Heart left ventricle (tissue), 16 donors: ENCODE measurements at regions of chr10 and their contacts with region 1.

Region 1: GRCh38 chr10:79112881-79113431 is 44.2 kb downstream of the ZMIZ1 start:
- DNase-seq: peak in 3 of 5 donors; percentile 56 to 89 (median 71)
- ATAC-seq: peak; percentile 39 to 81 (median 68)
- H3K4me3 ChIP-seq: no peak overlapping the region
- H3K27ac ChIP-seq: peak overlapping the region; percentile 22 to 96 (median 86)
- H3K4me1 ChIP-seq: peaks cover 22 to 99% (median 86%) of the 10 kb centered on the region in 12 donors
- H3K27me3 ChIP-seq: no peaks in the 10 kb centered on the region
- CTCF ChIP-seq: no peak
- POLR2A ChIP-seq: no peak

Region 2: GRCh38 chr10:79059859-79060379 is 53.0 kb before region 1 on chr10:
- intact Hi-C with region 1: no loop called
- DNase-seq: peak in 2 of 5 donors; percentile 17 to 24
- ATAC-seq: no peak
- H3K4me3 ChIP-seq: no peak overlapping the region
- H3K27ac ChIP-seq: no peak overlapping the region
- H3K4me1 ChIP-seq: peaks cover 0 to 10% (median 4%) of the 10 kb centered on the region in 12 donors
- H3K27me3 ChIP-seq: no peaks in the 10 kb centered on the region
- CTCF ChIP-seq: no peak
- POLR2A ChIP-seq: no peak

Region 3: DNA sequence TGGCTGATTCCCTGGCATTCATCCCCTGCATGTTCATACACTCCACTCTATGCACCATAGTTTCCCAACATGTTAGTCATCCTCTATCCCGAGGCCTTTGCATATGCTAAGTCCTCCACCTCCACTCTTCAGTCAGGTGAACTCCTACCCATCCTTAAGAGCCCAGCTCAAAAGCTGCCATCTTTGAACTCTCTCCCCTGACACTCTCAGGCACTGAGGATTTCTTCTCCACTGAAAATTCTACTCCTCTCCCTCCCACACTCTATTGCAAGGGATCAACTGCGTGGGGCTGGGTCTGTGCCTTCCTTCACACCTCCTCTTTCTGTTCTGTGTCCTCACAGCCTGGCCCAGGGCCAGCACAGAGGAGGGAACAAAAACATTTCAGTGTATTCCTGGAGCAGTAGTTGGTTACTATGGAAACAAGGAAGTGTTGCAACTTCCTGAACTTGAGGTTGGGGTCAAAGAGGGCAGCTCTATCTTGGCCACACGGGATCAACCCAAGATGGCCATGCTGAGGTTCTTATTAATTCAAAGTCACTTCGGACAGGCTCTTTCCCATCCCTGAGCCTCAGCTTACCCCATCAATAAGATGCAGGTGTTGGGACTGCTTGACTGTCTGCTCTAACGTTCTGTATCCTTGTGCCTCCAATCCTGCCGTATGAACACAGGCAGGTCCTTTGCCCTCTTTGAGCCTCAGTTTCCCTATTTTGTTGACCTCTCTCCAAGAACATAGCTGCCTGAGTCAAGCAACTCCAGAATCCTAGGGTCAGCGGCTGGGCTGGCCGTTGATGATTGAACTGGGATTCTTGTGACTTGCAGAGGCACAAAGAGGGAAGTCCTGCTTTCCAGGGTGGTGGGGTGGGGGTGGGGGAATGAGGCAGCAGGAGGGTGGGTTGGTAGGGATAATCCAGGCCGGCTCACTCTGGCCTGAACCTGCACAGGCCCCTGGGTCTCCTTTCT is 28.7 kb before region 1 on chr10:
- intact Hi-C with region 1: loop called in 1 of 10 experiments (anchors 2 kb)
- DNase-seq: peak; percentile 88 to 96 (median 95)
- ATAC-seq: peak; percentile 54 to 74 (median 62)
- H3K4me3 ChIP-seq: peak overlapping the region in 1 of 12 donors; percentile 29
- H3K27ac ChIP-seq: peak overlapping the region; percentile 53 to 99 (median 77)
- H3K4me1 ChIP-seq: peaks cover 28 to 100% (median 97%) of the 10 kb centered on the region in 12 donors
- H3K27me3 ChIP-seq: no peaks in the 10 kb centered on the region
- CTCF ChIP-seq: no peak
- POLR2A ChIP-seq: no peak